Activated CD4-positive, alpha-beta T cell treated with anti-CD3 and anti-CD28 coated beads for 36 hours (primary cell): ENCODE measurements at regions of chr3 and their contacts with region 1.

Region 1: DNA sequence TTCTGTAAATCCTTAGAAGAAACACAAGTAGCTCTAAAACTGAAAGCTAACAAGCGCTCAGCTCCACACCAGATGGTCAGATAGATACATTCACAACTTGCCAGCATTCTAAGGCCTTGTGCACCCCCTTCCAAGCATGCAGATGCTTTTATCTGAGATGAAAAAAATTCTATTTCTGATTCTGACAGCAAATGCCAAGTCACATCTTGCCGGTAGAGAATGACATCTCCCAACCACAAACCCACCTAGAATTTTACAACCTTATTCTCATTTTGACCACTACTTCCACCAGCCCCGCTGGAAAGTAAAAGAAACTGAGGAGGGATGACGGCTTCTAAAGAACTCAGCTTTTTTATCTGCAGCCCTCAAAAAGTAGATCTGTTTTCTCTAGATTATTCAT is 57.7 kb downstream of the SUMF1 start:
- DNase-seq: peak; percentile 43
- ATAC-seq: peak; percentile 67
- H3K4me3 Mint-ChIP-seq: peak overlapping the region; percentile 4
- H3K27ac Mint-ChIP-seq: peak overlapping the region; percentile 87
- H3K4me1 Mint-ChIP-seq: peaks cover 40% of the 10 kb centered on the region
- H3K27me3 Mint-ChIP-seq: no peaks in the 10 kb centered on the region

Region 2: GRCh38 chr3:3984053-3984452 is 425.4 kb before region 1 on chr3:
- CTCF ChIA-PET with region 1: no interaction called
- POLR2A ChIA-PET with region 1: no interaction called
- intact Hi-C with region 1: no loop called
- DNase-seq: no peak
- ATAC-seq: no peak
- H3K4me3 Mint-ChIP-seq: no peak overlapping the region
- H3K27ac Mint-ChIP-seq: no peak overlapping the region
- H3K4me1 Mint-ChIP-seq: no peaks in the 10 kb centered on the region
- H3K27me3 Mint-ChIP-seq: no peaks in the 10 kb centered on the region

Region 3: GRCh38 chr3:4119119-4119518 is 290.3 kb before region 1 on chr3:
- CTCF ChIA-PET with region 1: no interaction called
- POLR2A ChIA-PET with region 1: no interaction called
- intact Hi-C with region 1: no loop called
- DNase-seq: no peak
- ATAC-seq: no peak
- H3K4me3 Mint-ChIP-seq: no peak overlapping the region
- H3K27ac Mint-ChIP-seq: no peak overlapping the region
- H3K4me1 Mint-ChIP-seq: no peaks in the 10 kb centered on the region
- H3K27me3 Mint-ChIP-seq: no peaks in the 10 kb centered on the region

Region 4: DNA sequence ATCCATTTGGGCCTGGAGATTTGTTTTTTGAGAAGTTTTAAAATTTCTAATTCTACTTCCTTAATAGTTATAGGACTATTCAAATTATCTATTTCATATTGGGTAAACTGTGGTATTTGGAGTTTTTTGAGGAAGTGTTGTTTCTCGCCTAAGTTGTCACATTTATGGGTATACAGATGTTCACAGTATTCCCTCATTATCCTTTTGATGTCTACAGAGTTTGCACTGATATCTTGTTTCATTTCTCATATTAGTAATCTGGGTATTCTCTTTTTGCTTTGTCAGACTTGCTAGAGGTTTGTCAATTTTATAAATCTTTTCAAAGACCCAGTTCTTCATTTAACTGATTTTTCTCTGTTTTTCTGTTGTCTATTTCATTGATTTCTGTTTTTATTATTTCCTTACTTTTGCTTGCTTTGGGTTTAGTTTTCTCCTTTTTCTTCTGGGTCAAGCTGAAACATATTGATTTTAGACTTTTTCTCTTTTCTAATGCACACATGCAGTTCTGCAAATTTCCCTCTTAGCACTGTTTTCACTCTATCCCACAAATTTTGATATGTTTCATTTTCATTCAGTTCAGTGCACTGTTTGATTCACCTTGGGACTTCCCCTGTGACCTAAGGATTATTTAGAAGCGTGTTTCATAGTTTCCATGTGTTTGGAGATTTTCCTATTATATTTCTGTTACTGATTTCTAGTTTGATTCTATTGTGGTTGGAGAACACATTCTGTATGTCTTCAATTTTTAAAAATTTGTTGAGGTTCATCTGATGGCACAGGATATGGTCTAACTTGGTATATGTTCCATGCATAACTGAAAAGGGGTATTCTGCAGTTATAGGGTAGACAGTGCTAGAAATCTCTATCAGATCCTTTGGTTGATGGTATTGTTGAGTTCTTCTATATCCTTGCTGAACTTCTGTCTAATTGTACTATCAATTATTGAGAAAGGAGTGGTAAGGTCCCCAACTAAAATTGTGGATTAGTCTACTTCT is 21.9 kb before region 1 on chr3:
- CTCF ChIA-PET with region 1: interaction called, 3 read pairs
- POLR2A ChIA-PET with region 1: no interaction called
- intact Hi-C with region 1: loop called (anchors 1 kb)
- DNase-seq: no peak
- ATAC-seq: peak; percentile 91
- H3K4me3 Mint-ChIP-seq: peak overlapping the region; percentile 1
- H3K27ac Mint-ChIP-seq: peak overlapping the region; percentile 51
- H3K4me1 Mint-ChIP-seq: peaks cover 37% of the 10 kb centered on the region
- H3K27me3 Mint-ChIP-seq: no peaks in the 10 kb centered on the region

Region 5: GRCh38 chr3:4394048-4394447 is 15.4 kb before region 1 on chr3:
- CTCF ChIA-PET with region 1: interaction called, 6 read pairs
- POLR2A ChIA-PET with region 1: no interaction called
- intact Hi-C with region 1: loop called in 1 of 2 experiments (anchors 2 kb)
- DNase-seq: peak; percentile 41
- ATAC-seq: peak; percentile 75
- H3K4me3 Mint-ChIP-seq: no peak overlapping the region
- H3K27ac Mint-ChIP-seq: no peak overlapping the region
- H3K4me1 Mint-ChIP-seq: peaks cover 38% of the 10 kb centered on the region
- H3K27me3 Mint-ChIP-seq: no peaks in the 10 kb centered on the region

Region 6: DNA sequence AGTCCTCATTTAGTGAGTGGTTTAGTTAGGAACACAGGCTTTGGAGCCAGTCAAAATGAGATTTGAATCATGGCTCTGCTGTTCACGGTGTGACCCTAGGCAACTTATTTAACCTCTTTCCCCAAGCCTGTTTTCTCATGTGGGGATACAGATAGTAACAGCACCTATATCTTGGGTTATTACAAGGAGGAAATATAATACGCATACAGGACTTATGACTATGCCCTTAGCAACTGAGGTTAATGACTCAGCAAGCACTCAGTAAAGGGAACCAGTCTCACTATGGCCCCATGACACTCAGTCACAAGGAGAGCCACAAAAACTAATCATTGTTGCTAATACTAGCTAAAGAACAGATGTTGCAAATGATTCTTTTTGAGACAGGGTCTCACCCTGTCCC is 11.7 kb after region 1 on chr3:
- CTCF ChIA-PET with region 1: no interaction called
- POLR2A ChIA-PET with region 1: no interaction called
- intact Hi-C with region 1: loop called (anchors 1 kb)
- DNase-seq: peak; percentile 49
- ATAC-seq: peak; percentile 89
- H3K4me3 Mint-ChIP-seq: no peak overlapping the region
- H3K27ac Mint-ChIP-seq: peak overlapping the region; percentile 62
- H3K4me1 Mint-ChIP-seq: peaks cover 34% of the 10 kb centered on the region
- H3K27me3 Mint-ChIP-seq: no peaks in the 10 kb centered on the region

Region 7: DNA sequence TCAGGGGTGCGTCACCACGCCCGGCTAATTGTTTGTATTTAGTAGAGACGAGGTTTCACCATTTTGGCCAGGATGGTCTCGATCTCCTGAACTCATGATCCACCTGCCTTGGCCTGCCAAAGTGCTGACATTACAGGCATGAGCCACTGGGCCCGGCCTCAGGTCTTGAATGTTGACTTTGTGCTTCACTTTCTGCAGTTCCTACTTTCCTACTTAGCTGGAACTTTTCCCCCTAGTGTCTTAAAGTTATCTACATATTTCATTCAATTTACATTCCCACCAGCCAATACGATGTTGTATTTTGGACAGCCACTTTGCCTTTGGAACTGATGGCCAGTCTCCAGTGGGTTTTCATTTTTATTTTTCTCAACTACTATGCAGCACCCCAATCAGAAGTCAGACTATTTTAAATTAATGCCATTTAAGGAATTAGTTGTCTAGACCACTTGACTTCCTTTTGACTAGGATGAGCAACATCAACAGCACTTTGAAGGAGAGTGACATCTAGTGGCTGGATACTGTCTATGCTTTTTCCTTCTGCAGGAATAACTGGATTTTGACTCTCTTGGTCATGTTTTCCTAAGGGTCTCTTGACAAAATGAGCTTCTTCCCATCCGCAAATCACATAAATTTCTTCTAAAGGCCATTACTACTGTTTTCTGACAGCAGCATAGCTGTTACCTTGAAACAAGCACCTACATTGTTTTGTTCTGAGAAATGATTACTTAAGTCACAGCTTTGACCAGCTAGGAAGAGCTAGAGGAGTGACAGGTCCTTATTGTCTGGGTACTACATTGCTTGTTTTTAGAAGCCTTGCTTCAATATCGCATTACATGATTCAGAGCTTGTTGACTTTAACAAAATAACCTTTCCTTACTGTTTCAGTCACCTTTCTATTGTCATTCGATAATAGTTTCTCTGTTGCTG is 223.9 kb after region 1 on chr3:
- CTCF ChIA-PET with region 1: interaction called, 4 read pairs
- POLR2A ChIA-PET with region 1: no interaction called
- intact Hi-C with region 1: loop called in 1 of 2 experiments (anchors 5 kb)
- DNase-seq: no peak
- ATAC-seq: peak; percentile 57
- H3K4me3 Mint-ChIP-seq: no peak overlapping the region
- H3K27ac Mint-ChIP-seq: peak overlapping the region; percentile 37
- H3K4me1 Mint-ChIP-seq: peaks cover 6% of the 10 kb centered on the region
- H3K27me3 Mint-ChIP-seq: no peaks in the 10 kb centered on the region